A549 (cell line): ENCODE measurements at regions of chr12 and their contacts with region 1.

Region 1: DNA sequence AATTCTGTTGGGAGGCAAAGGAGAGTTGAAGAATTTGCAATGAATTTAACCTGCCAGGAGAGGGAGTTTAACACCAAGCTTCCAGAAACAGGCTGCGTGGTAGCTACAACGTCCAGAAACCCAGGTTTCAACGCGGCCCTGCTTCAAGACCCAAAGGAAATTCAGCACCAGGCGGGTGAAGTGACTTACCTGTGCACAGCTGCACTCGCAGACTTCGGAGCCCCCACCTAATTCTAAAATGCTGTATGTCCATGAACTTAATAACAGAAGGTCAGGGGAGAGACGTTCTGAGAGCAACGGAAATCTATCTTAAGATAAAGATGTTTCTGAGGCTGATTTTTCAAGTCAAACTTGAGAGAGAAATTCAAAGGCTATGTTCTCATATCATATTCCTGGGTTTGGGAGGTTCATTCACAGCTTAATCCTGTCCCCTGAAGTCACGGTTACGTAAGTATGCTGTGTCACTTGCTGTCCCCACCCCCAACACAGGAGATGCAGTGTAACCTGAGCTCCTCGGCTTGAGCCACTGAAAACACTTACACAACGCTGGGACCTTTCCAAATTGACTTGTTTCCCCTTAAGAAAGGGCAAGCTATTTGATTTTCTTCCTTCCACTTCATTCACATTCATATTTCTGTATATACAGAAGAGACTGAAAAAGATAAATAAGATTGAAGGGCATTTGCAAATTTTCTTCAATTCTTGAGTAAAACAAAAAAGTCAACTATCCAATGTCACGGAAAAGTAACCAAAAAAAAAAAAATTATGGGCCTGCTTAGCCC is 22.7 kb downstream of the CLIP1 start:
- DNase-seq: peak; percentile 91 to 96
- ATAC-seq: peak; percentile 73 to 88
- H3K4me3 ChIP-seq: peak overlapping the region; percentile 39
- H3K27ac ChIP-seq: peak overlapping the region; percentile 98
- H3K4me1 ChIP-seq: peaks cover 72% of the 10 kb centered on the region
- CTCF ChIP-seq: peak; percentile 89
- EP300 ChIP-seq: peak in 1 of 2 experiments; percentile 39; a peak in 2 of 5 replicates
- POLR2A ChIP-seq: no peak
- RAD21 ChIP-seq: peak; percentile 95 to 97

Region 2: GRCh38 chr12:121894633-121895032 is 505.1 kb before region 1 on chr12:
- CTCF ChIA-PET with region 1: no interaction called
- POLR2A ChIA-PET with region 1: no interaction called
- DNase-seq: peak; percentile 49 to 72
- ATAC-seq: peak; percentile 70 to 85
- H3K4me3 ChIP-seq: no peak overlapping the region
- H3K27ac ChIP-seq: peak overlapping the region in 1 of 2 experiments; percentile 67; a peak in 1 of 6 replicates
- H3K4me1 ChIP-seq: peaks cover 30% of the 10 kb centered on the region
- CTCF ChIP-seq: peak; percentile 37
- EP300 ChIP-seq: no peak
- POLR2A ChIP-seq: no peak
- RAD21 ChIP-seq: peak in 1 of 2 experiments; percentile 34; a peak in 1 of 5 replicates

Region 3: GRCh38 chr12:122225683-122226407 is 173.9 kb before region 1 on chr12 and contains the start of gene DIABLO:
- CTCF ChIA-PET with region 1: no interaction called
- POLR2A ChIA-PET with region 1: interaction called, 10 read pairs
- DNase-seq: peak; percentile 92 to 100
- ATAC-seq: peak; percentile 88 to 93
- H3K4me3 ChIP-seq: peak within 1 kb of the TSS; percentile 63
- H3K27ac ChIP-seq: peak within 1 kb of the TSS; percentile 91 to 95
- H3K4me1 ChIP-seq: peaks cover 15% of the 10 kb centered on the region
- CTCF ChIP-seq: no peak
- EP300 ChIP-seq: no peak
- POLR2A ChIP-seq: peak; percentile 95
- RAD21 ChIP-seq: no peak
- polyA plus RNA-seq, gene DIABLO: 104 and 108 TPM in 2 replicates

Region 4: GRCh38 chr12:122356192-122356635 is 43.6 kb before region 1 on chr12:
- CTCF ChIA-PET with region 1: interaction called, 19 read pairs
- POLR2A ChIA-PET with region 1: no interaction called
- DNase-seq: peak; percentile 22 to 77
- ATAC-seq: peak; percentile 96 to 97
- H3K4me3 ChIP-seq: no peak overlapping the region
- H3K27ac ChIP-seq: no peak overlapping the region
- H3K4me1 ChIP-seq: no peaks in the 10 kb centered on the region
- CTCF ChIP-seq: peak; percentile 86
- EP300 ChIP-seq: no peak
- POLR2A ChIP-seq: no peak
- RAD21 ChIP-seq: peak; percentile 47 to 63

Region 5: DNA sequence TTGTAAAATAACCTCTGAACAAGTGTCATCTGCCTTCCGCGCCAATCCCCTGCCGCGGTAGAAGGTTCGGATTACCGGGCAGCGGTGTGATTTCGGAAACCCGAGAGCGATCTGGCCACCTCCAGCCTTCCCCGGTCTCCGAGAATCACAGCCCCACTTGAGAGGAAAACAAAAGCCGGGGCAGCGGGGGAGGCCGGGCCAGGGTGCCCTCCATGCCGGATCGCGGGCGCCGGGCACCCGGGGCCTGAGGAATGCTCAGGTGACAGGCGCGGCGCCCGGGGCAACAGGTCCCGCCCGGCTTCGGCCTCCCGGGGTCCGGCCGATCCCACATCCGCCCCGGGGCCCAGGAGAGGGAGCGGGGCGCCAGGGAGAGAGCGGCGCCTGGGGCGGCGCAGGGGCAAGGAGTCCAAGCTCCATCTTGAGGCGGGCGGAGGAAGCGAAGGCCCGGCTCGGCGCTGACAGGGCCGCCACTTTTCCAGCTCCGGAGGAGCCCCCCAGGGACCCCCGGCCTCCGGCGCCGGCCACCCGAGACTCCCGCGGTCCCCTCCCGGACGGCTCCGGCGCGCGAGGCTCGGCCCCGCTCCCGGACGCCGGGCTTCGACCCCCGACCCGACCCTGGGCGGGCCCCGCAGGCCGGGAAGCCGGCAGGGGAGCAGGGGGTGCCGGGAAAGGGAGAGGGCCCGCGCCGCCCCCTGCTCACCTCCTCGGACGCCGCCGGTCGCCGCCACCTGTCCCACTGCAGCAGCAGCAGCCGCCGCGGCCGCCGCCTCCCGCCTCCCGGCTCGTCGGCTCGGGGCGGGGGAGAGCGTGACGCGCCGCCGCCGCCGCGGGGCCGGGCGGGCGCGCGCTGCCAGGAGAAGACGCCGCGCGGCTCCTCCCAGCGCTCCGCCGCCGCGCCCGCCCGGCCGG is 22.3 kb after region 1 on chr12 and contains the start of gene CLIP1:
- CTCF ChIA-PET with region 1: interaction called, 79 read pairs
- POLR2A ChIA-PET with region 1: interaction called, 55 read pairs
- DNase-seq: peak; percentile 40 to 79
- ATAC-seq: peak; percentile 80 to 86
- H3K4me3 ChIP-seq: peak within 1 kb of the TSS; percentile 79
- H3K27ac ChIP-seq: peak within 1 kb of the TSS; percentile 100
- H3K4me1 ChIP-seq: peaks cover 48% of the 10 kb centered on the region
- CTCF ChIP-seq: peak; percentile 60
- EP300 ChIP-seq: no peak
- POLR2A ChIP-seq: peak; percentile 45; the same call in 1 of the 2 replicates
- RAD21 ChIP-seq: peak; percentile 58 to 78
- polyA plus RNA-seq, gene CLIP1: 133 and 149 TPM in 2 replicates

Region 6: GRCh38 chr12:122463806-122464205 is 64.0 kb after region 1 on chr12:
- CTCF ChIA-PET with region 1: interaction called, 162 read pairs
- POLR2A ChIA-PET with region 1: interaction called, 11 read pairs
- DNase-seq: no peak
- ATAC-seq: no peak; a peak in 1 of 6 replicates
- H3K4me3 ChIP-seq: no peak overlapping the region
- H3K27ac ChIP-seq: peak overlapping the region; percentile 70 to 88
- H3K4me1 ChIP-seq: peaks cover 25% of the 10 kb centered on the region
- CTCF ChIP-seq: no peak
- EP300 ChIP-seq: no peak
- POLR2A ChIP-seq: no peak
- RAD21 ChIP-seq: no peak

Region 7: DNA sequence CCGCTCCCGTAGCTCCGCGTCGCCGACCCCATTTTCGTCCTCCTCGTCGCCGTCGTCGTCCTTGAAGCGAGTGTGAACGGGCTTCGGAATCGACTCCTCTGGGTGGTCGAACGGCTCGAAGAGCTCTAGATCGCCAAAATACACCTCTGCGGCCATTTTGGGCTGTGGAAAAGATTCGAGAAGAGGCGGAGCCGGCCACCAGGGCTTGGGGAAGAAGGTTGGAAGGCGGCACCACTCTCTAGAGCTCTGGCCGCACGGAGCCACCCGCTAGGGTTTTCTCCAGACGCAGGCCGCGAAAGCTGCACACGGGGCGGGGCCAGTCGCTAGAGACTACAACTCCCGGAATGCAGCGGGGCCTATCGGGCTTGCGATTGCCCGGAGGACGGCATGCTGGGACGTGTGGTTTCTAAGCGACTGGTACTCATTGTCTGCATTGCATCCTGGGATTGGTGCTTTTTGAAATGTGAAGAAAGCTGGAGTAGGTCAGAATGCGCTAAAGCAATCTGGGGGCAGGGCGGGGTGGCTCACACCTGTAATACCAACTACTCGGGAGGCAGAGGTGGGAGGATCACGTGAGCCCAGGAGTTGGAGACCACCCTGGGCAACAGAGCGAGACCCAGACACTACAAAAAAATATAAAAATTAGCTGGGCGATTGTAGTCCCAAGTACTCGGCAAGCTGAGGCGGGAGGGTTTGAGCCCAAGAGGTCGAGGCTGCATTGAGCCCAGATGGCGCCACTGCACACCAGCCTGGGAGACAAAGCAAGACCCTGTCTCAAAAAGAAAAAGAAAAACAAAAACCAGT is 101.1 kb after region 1 on chr12 and contains the start of gene ZCCHC8:
- CTCF ChIA-PET with region 1: interaction called, 13 read pairs
- POLR2A ChIA-PET with region 1: interaction called, 39 read pairs
- DNase-seq: peak; percentile 98 to 99
- ATAC-seq: peak; percentile 95 to 96
- H3K4me3 ChIP-seq: peak within 1 kb of the TSS; percentile 70
- H3K27ac ChIP-seq: peak within 1 kb of the TSS; percentile 94 to 98
- H3K4me1 ChIP-seq: peaks cover 20% of the 10 kb centered on the region
- CTCF ChIP-seq: peak; percentile 30
- EP300 ChIP-seq: no peak
- POLR2A ChIP-seq: peak; percentile 63
- RAD21 ChIP-seq: 0 out of 5 replicates have a peak, but pooled peaks of 1 of the 2 experiments have one; percentile 12
- polyA plus RNA-seq, gene ZCCHC8: 35.6 and 40.1 TPM in 2 replicates

Region 8: DNA sequence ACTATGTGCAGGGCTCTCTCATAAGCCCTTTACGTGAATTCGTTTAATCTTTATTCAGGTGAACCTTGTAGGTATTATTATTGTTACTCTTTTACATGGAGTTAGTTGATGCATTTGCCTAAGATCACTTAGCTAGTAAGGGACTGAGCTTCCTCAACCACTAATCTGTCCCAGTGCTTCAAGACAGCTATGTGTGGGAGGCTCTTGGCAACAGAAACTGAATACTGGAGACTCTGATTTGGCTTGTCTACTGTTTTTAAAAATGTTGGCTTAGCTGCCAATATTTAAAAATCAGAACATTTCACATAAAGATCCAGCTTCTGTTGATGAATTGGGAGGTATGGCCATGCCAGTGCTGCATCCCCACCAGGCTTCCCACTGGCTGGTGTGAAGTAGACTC is 134.1 kb after region 1 on chr12:
- CTCF ChIA-PET with region 1: no interaction called
- POLR2A ChIA-PET with region 1: no interaction called
- DNase-seq: no peak
- ATAC-seq: no peak
- H3K4me3 ChIP-seq: no peak overlapping the region
- H3K27ac ChIP-seq: no peak overlapping the region
- H3K4me1 ChIP-seq: no peaks in the 10 kb centered on the region; the same call in 2 of the 3 replicates
- CTCF ChIP-seq: no peak
- EP300 ChIP-seq: no peak
- POLR2A ChIP-seq: no peak
- RAD21 ChIP-seq: no peak